Sciatic nerve (tissue), 2 donors: ENCODE measurements at regions of chr1 and their contacts with region 1.

Region 1: GRCh38 chr1:225400968-225401367 is 26.9 kb downstream of the LBR start:
- DNase-seq: no peak
- ATAC-seq: no peak

Region 2: GRCh38 chr1:225318706-225319575 is 82.0 kb before region 1 on chr1:
- intact Hi-C with region 1: no loop called
- DNase-seq: no peak
- ATAC-seq: peak; percentile 61

Region 3: DNA sequence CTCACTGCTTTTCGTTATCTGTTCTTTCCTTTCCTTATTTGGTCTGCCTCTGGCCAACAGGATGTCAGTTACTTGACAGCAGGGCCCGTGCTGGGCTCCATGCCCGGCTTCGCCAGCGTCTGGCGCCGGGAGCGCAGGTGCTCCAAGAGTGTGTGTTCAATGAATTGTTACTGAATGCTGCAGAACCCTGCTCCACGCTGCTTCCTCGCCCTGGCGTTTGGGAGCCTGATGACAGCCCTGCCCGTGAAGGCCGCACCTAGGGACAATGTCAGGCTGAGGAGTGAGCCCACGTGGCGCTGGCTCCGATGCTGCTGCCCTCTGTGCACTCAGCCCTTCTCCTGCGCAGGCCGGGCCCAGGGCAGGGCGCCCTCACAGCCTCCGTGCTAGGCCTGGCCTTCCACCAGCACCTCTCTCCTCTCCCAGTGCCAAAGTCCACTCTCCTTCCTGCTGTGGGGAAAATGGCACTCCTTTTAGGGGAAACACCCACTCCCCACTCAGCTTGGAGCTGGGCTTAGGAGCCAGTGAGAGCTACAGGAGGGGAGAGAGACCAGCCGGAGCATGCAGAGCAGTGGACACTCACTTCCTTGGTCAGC is 734.2 kb after region 1 on chr1:
- intact Hi-C with region 1: loop called (anchors 5 kb)
- DNase-seq: peak; percentile 54
- ATAC-seq: peak; percentile 72